Right cardiac atrium (tissue), 5 donors: ENCODE measurements at regions of chr12 and their contacts with region 1.

Region 1: DNA sequence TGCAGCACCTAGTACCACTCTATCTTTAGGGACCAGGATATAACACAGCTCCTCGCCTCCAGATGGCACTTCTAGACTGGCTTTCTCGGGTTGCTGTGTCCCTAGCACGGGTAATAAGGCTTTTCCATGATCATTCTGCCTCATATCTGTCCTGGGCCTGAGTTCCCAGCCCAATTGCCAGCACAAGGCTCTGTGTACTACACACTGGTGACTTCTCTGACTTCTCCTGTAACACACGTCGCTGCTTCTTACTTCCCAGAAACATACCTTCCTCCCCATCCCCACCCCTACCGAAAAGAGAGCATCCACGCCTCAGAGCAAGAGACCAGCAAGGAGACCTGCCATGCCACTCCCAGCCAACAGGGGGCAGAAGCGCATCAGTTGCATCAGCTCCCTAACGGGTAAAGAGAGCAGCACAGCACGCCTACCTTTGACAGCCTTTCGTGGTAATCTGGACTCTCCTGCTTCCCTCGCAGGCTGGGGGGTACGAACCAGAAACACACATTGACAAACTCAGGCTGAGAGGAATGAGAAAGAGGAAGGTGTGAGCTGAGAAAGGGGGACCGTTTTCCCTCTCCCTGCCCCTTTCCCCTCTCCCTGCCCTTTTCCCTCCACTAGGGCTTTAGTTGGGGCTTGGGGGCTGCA is 21.2 kb upstream of the ZNF740 start:
- DNase-seq: peak; percentile 79 to 95 (median 92)
- ATAC-seq: peak; percentile 85 to 87
- H3K4me3 ChIP-seq: no peak overlapping the region
- H3K27ac ChIP-seq: no peak overlapping the region
- H3K4me1 ChIP-seq: no peaks in the 10 kb centered on the region
- H3K27me3 ChIP-seq: no peaks in the 10 kb centered on the region

Region 2: DNA sequence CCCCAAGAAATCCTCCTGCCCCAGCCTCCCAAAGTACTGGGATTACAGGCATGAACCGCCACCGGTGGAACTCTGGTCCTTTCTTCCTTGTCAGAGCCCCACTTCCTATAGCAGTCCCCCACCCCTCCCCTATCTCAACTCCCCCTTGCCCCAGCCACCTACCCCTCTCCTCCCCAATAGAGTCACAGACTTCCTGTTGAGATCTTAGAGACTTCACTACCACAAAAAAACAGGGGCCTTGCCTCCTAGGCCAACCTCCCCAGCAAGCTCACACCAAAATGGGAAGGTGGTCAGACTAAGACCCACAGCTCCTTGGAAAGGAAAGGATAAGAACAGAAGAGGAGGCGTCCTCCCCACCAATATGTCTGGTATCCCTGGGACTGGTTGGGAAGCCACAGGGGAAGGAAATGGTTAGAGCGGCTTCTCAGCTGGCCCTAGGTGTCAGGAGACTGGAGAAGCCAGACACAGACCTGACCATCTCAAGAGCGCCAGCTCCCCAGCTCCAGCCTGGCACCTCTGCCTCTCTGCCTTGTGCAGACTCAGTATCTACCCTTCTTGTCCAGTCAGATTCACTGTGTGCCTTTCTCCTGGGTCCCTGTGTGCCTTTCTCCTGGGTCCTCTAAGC is 39.3 kb after region 1 on chr12:
- intact Hi-C with region 1: loop called in 2 of 4 experiments (anchors 5 kb)
- DNase-seq: no peak
- ATAC-seq: no peak
- H3K4me3 ChIP-seq: no peak overlapping the region
- H3K27ac ChIP-seq: no peak overlapping the region
- H3K4me1 ChIP-seq: no peaks in the 10 kb centered on the region
- H3K27me3 ChIP-seq: no peaks in the 10 kb centered on the region

Region 3: GRCh38 chr12:53279888-53280498 is 120.7 kb after region 1 on chr12:
- intact Hi-C with region 1: loop called in 1 of 4 experiments (anchors 5 kb)
- DNase-seq: no peak
- ATAC-seq: no peak
- H3K4me3 ChIP-seq: no peak overlapping the region
- H3K27ac ChIP-seq: no peak overlapping the region
- H3K4me1 ChIP-seq: no peaks in the 10 kb centered on the region
- H3K27me3 ChIP-seq: no peaks in the 10 kb centered on the region